WTC11 (cell line): ENCODE measurements at regions of chr3 and their contacts with region 1.

Region 1: DNA sequence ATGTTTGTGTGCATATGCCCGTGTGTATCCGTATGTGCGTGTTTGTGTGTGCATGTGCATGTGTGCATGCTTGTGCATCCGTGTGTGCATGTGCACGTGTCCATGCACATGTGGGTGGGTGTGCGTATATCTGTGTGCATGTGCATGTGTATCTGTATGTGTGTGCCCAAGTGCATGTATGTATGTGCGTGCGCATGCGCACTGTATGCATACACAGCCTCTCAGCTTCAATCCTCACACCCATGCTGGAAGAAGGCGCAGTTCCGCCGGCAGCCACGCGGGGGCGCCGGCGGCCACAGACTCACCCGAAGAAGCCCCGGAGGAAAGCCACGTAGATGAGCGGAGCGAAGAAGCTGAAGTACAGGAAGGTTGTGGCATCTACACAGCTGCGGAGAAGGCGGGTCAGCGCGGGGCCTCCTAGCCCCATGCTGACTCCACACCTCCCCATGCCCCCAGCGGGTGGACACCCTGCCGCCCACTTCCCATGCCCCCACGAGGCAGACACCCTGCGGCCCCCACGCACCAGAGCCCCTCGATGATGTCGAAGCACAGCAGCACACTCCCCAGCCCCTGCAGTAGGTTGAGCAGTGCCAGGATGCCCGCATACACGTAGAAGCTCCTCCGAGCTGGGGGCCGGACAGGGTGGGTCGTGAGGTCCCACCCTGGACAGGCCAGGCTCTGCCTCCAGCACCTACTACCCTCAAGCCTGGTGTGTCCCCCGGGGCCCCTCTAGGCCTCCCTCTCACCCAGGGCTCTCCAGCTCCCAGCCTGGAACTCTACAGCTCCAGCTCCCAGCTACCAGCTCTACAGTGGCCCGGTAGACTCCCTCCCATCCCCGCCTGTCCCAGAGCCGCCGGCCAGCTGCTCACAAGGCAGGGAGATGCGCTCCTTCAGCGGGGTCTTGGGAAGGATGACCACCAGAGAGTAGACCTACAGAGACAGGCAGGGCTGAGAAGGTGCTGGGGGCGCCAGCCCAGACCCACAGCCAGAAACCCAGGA is 15.4 kb downstream of the TPRA1 start:
- DNase-seq: peak; percentile 81
- ATAC-seq: peak; percentile 86
- H3K4me3 Mint-ChIP-seq: no peak overlapping the region
- H3K27ac Mint-ChIP-seq: no peak overlapping the region
- H3K4me1 Mint-ChIP-seq: no peaks in the 10 kb centered on the region
- H3K27me3 Mint-ChIP-seq: no peaks in the 10 kb centered on the region; the same call in 1 of the 2 replicates
- CTCF ChIP-seq: peak; percentile 98

Region 2: DNA sequence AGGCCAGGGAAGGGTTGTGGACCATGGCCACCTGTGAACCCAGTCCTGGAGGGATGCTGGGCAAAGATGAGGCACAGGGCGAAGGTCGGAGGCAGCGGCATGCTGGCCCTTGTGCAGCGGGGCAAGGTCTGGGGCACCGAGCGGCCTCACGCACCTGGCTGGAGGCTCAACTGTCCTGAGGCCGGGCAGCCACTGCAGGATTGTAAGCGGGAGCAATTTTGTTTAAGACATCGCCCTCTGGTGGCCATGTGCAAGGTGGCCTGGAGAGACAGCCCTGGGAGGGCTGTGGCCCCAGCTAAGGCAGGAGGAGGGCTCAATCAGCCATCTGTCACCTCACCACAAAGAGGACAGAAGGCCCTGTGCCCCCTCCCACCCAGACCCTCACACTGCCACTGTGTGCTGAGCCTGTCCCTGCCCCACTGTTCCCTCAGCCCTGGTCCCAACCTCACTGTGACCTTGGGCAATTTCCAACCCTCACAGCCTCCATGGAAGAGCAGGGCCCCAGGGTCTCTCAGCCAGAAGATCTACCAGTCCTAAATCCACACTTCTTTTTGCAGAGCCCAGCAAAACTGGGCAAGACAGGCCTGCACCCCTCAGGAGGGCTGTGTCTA is 30.9 kb before region 1 on chr3:
- CTCF ChIA-PET with region 1: interaction called, 31 read pairs
- POLR2A ChIA-PET with region 1: no interaction called
- DNase-seq: peak; percentile 87
- ATAC-seq: peak; percentile 59
- H3K4me3 Mint-ChIP-seq: no peak overlapping the region
- H3K27ac Mint-ChIP-seq: no peak overlapping the region
- H3K4me1 Mint-ChIP-seq: peaks cover 16% of the 10 kb centered on the region
- H3K27me3 Mint-ChIP-seq: peaks cover 8% of the 10 kb centered on the region; the same call in 1 of the 2 replicates
- CTCF ChIP-seq: peak; percentile 83

Region 3: GRCh38 chr3:127556565-127556964 is 18.6 kb before region 1 on chr3:
- CTCF ChIA-PET with region 1: interaction called, 46 read pairs
- POLR2A ChIA-PET with region 1: no interaction called
- DNase-seq: peak; percentile 62
- ATAC-seq: peak; percentile 82
- H3K4me3 Mint-ChIP-seq: no peak overlapping the region
- H3K27ac Mint-ChIP-seq: no peak overlapping the region
- H3K4me1 Mint-ChIP-seq: peaks cover 4% of the 10 kb centered on the region
- H3K27me3 Mint-ChIP-seq: no peaks in the 10 kb centered on the region; the same call in 1 of the 2 replicates
- CTCF ChIP-seq: no peak

Region 4: DNA sequence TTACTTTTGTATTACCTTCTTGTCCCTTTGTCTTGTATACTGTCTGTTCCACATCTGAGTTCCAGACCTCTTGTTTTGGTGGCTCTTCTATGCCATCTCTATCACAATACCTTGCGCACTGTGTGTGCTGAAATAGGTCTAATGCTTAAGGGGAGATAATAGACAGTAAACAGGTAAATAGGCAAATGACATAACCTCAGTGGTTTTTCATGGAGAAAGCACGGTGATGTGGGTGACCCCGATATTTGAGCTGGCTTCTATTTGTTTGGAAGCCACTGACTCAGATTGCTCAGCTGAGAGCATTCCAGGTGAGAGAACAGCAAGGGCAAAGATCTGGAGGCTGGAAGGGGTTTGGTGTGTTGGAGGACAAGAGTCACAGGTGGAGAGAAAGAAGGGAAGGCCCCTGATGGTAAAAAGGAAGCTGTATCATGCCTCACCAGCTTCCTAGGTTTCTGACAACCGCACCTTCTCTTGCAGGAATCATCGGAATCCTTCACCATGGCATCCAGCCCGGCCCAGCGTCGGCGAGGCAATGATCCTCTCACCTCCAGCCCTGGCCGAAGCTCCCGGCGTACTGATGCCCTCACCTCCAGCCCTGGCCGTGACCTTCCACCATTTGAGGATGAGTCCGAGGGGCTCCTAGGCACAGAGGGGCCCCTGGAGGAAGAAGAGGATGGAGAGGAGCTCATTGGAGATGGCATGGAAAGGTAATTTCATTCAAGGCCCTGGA is 23.8 kb after region 1 on chr3:
- CTCF ChIA-PET with region 1: interaction called, 77 read pairs
- POLR2A ChIA-PET with region 1: interaction called, 3 read pairs
- DNase-seq: no peak
- ATAC-seq: no peak
- H3K4me3 Mint-ChIP-seq: peak overlapping the region; percentile 86
- H3K27ac Mint-ChIP-seq: peak overlapping the region; percentile 99
- H3K4me1 Mint-ChIP-seq: peaks cover 30% of the 10 kb centered on the region
- H3K27me3 Mint-ChIP-seq: no peaks in the 10 kb centered on the region; the same call in 1 of the 2 replicates
- CTCF ChIP-seq: no peak

Region 5: DNA sequence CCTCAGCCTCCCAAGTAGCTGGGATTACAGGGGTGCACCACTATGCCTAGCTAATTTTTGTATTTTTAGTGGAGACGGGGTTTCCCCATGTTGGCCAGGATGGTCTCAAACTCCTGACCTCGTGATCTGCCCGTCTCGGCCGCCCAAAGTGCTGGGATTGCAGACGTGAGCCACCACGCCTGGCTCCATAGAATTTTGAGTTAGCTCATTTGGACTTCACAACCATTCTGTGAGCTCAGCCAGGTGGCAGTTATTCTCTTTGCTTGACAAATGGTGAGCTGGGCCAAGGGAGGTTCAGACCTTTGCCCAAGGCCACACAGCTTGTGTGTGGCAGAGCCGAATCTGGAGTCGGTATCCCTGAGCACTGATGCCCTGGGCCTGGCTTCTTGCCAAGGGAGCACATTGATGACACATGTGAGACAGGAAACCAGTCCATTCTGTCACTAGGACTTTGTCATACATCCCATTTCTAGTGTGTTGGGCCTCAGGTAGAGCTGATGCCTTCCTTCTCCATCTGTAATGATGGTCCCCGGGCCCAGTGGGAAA is 71.4 kb after region 1 on chr3:
- CTCF ChIA-PET with region 1: interaction called, 22 read pairs
- POLR2A ChIA-PET with region 1: no interaction called
- DNase-seq: no peak
- ATAC-seq: no peak
- H3K4me3 Mint-ChIP-seq: no peak overlapping the region
- H3K27ac Mint-ChIP-seq: no peak overlapping the region
- H3K4me1 Mint-ChIP-seq: peaks cover 26% of the 10 kb centered on the region
- H3K27me3 Mint-ChIP-seq: no peaks in the 10 kb centered on the region
- CTCF ChIP-seq: no peak

Region 6: DNA sequence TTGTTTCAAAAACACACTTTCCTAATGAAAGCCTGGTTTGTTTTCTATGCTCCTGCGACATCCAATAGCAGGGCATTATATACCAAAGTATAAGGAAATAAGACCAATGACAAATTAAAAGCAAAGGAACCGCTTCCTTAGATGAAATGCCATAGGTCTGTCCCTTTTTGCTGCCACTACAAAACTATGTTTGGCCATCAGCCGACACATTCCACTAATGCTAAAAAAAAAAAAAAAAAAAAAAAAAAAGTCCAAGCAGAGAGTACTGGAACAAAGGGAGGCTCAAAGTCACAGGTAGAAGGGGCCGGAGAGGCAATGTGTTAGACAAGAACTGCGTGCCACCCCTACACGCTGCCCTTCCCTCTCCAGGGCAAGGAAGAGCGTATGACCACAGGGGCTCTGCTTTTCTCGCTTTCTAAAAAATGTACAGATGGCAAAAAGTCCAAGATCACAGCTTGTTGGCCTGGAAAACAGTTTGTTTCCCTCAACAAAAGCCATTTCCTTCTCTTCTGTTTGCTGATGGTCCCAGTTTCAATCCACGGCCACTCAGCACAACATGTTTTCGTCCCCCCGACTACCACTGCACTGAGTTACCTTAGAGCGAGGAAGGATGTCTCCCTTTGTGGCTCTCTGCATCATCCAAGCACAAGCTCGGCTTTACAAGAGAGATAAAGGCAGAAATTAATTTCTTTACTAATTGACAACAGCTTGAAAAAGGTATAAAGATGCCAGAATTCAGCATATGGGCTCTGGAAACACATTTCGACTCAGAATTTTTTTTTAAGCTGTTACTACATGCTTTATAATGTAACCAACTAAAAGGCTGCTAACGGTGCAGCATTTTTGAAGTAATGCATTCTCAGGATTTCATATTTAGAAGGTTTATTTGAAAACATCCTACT is 168.4 kb after region 1 on chr3:
- CTCF ChIA-PET with region 1: no interaction called
- POLR2A ChIA-PET with region 1: no interaction called
- DNase-seq: no peak
- ATAC-seq: no peak
- H3K4me3 Mint-ChIP-seq: no peak overlapping the region
- H3K27ac Mint-ChIP-seq: no peak overlapping the region
- H3K4me1 Mint-ChIP-seq: no peaks in the 10 kb centered on the region
- H3K27me3 Mint-ChIP-seq: no peaks in the 10 kb centered on the region
- CTCF ChIP-seq: no peak